MCF 10A (cell line): ENCODE measurements at regions of chr4 and their contacts with region 1.

Region 1: DNA sequence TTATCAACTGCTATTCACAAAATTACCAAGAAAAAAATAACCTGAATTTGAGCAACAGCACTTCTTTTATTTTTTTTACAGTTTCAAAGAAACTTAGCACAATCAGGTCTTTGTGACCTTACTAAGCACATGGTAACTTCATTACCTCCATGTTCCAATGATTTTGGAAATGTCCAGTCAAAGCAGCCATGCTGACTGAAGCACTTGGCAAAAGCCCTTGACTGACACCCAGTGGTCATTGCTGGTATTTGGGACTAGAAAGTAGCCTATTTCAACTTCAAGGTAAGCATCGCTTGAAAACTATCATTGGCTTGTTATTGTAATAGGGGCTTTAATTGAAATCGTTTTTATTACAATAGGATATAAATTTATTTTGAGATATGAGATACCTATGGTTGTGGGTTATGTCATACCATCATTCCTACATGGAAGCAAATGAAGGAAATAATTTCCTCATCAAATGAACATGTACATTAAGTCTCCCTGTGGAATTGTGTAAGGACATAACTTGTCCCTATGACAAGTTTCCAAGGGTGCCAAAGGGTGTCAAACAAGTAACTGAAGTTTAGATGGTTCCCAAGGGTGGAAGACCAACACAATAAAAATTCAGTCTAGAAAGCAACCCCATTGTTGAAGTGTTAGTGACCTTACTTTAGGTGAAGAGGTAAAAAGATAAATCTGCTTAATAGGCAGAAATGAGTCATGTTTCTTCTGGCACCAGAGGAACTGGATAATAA is 15.2 kb upstream of the ANXA10 start:
- DNase-seq: peak; percentile 76
- H3K4me3 Mint-ChIP-seq: no peak overlapping the region
- H3K27ac Mint-ChIP-seq: no peak overlapping the region
- H3K4me1 Mint-ChIP-seq: no peaks in the 10 kb centered on the region
- H3K27me3 Mint-ChIP-seq: no peaks in the 10 kb centered on the region
- CTCF ChIP-seq: peak; percentile 94

Region 2: GRCh38 chr4:167290678-167291077 is 786.5 kb before region 1 on chr4:
- CTCF ChIA-PET with region 1: no interaction called
- POLR2A ChIA-PET with region 1: no interaction called
- intact Hi-C with region 1: loop called (anchors 2 kb)
- DNase-seq: peak; percentile 33
- H3K4me3 Mint-ChIP-seq: no peak overlapping the region
- H3K27ac Mint-ChIP-seq: no peak overlapping the region
- H3K4me1 Mint-ChIP-seq: no peaks in the 10 kb centered on the region
- H3K27me3 Mint-ChIP-seq: no peaks in the 10 kb centered on the region
- CTCF ChIP-seq: peak; percentile 42

Region 3: DNA sequence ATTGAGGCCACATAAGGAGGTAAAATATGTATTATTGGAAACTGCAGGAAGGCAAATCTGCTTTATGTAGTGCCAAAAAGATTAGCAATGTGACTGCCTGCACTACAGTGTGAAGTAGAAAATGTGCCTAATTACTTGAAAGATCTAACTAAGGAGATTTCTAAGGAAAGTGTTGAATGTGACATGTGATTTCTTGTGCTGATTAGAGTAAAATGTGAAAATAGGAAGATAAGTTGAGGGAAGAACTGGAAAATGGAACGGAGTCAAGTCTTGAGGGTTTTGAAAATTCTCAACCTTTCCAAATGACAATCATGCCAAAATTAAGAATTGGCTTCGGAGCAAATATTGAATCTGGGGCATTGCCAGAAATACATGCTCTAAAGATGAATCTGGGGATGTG is 633.3 kb before region 1 on chr4:
- CTCF ChIA-PET with region 1: no interaction called
- POLR2A ChIA-PET with region 1: no interaction called
- intact Hi-C with region 1: loop called (anchors 10 kb)
- DNase-seq: no peak
- H3K4me3 Mint-ChIP-seq: no peak overlapping the region
- H3K27ac Mint-ChIP-seq: no peak overlapping the region
- H3K4me1 Mint-ChIP-seq: no peaks in the 10 kb centered on the region
- H3K27me3 Mint-ChIP-seq: no peaks in the 10 kb centered on the region
- CTCF ChIP-seq: no peak